WTC11 (cell line): ENCODE measurements at regions of chr15 and their contacts with region 1.

Region 1: GRCh38 chr15:71575474-71576045 is 234.8 kb upstream of the NR2E3 start:
- DNase-seq: no peak
- ATAC-seq: no peak
- H3K4me3 Mint-ChIP-seq: no peak overlapping the region
- H3K27ac Mint-ChIP-seq: no peak overlapping the region
- H3K4me1 Mint-ChIP-seq: peaks cover 22% of the 10 kb centered on the region
- H3K27me3 Mint-ChIP-seq: no peaks in the 10 kb centered on the region
- CTCF ChIP-seq: no peak; the same call in 1 of the 2 replicates

Region 2: DNA sequence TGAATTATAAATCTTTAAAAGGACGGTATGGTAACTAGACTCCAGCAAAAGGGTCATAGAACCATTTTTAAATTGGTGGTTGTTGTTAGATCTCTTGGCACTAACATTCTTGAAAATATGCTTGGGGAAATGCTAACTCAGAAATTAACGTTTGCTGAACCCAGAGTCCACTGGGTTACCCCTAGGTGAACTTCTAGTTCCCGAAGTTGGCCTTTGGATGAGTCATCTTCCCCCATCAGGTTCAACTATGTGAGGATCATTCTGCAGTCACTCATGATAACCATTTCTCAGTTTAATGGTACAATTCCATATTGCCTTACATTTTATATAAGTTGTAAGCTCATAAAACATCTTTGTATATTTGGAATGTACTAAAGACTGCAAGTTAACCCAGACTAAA is 255.6 kb before region 1 on chr15:
- CTCF ChIA-PET with region 1: no interaction called
- POLR2A ChIA-PET with region 1: no interaction called
- DNase-seq: no peak
- ATAC-seq: no peak
- H3K4me3 Mint-ChIP-seq: no peak overlapping the region
- H3K27ac Mint-ChIP-seq: no peak overlapping the region
- H3K4me1 Mint-ChIP-seq: peaks cover 4% of the 10 kb centered on the region
- H3K27me3 Mint-ChIP-seq: no peaks in the 10 kb centered on the region
- CTCF ChIP-seq: no peak

Region 3: DNA sequence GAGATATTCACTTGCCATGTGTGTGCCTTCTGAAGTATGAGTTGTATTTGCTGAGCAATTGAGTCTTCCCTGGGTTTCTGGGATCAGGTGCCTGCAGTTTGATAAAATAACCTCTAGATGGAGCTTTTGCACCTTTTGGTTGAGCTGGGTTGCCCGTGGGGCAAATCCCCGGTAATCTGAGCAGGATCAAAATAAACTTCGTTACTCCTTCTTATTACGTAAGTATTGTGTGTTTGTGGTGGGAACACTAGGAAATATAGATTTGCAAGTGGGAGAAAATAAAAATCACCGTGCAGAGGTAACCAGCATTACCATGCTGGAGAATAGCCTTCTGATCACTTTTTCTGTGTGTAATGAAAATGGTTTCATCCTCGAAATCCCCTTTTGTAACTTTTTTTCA is 42.6 kb before region 1 on chr15:
- CTCF ChIA-PET with region 1: interaction called, 11 read pairs
- POLR2A ChIA-PET with region 1: no interaction called
- DNase-seq: peak; percentile 32
- ATAC-seq: peak; percentile 60
- H3K4me3 Mint-ChIP-seq: no peak overlapping the region; the same call in 1 of the 2 replicates
- H3K27ac Mint-ChIP-seq: no peak overlapping the region
- H3K4me1 Mint-ChIP-seq: no peaks in the 10 kb centered on the region
- H3K27me3 Mint-ChIP-seq: no peaks in the 10 kb centered on the region
- CTCF ChIP-seq: peak; percentile 75

Region 4: GRCh38 chr15:71591057-71591456 is 15.5 kb after region 1 on chr15:
- CTCF ChIA-PET with region 1: interaction called, 21 read pairs
- POLR2A ChIA-PET with region 1: no interaction called
- DNase-seq: no peak
- ATAC-seq: peak; percentile 61; the same call in 1 of the 2 replicates
- H3K4me3 Mint-ChIP-seq: no peak overlapping the region
- H3K27ac Mint-ChIP-seq: no peak overlapping the region
- H3K4me1 Mint-ChIP-seq: peaks cover 23% of the 10 kb centered on the region
- H3K27me3 Mint-ChIP-seq: no peaks in the 10 kb centered on the region
- CTCF ChIP-seq: no peak

Region 5: GRCh38 chr15:71651750-71652186 is 76.2 kb after region 1 on chr15:
- CTCF ChIA-PET with region 1: interaction called, 13 read pairs
- POLR2A ChIA-PET with region 1: no interaction called
- DNase-seq: peak; percentile 37
- ATAC-seq: peak; percentile 72
- H3K4me3 Mint-ChIP-seq: no peak overlapping the region
- H3K27ac Mint-ChIP-seq: no peak overlapping the region
- H3K4me1 Mint-ChIP-seq: peaks cover 50% of the 10 kb centered on the region
- H3K27me3 Mint-ChIP-seq: no peaks in the 10 kb centered on the region
- CTCF ChIP-seq: no peak

Region 6: GRCh38 chr15:71666763-71667620 is 91.4 kb after region 1 on chr15:
- CTCF ChIA-PET with region 1: no interaction called
- POLR2A ChIA-PET with region 1: no interaction called
- DNase-seq: no peak
- ATAC-seq: no peak
- H3K4me3 Mint-ChIP-seq: no peak overlapping the region
- H3K27ac Mint-ChIP-seq: no peak overlapping the region
- H3K4me1 Mint-ChIP-seq: no peaks in the 10 kb centered on the region
- H3K27me3 Mint-ChIP-seq: no peaks in the 10 kb centered on the region
- CTCF ChIP-seq: no peak